PC-3 (cell line): ENCODE measurements at regions of chr14 and their contacts with region 1.

Region 1: GRCh38 chr14:93619176-93619793 is 169.0 kb downstream of the PRIMA1 start:
- DNase-seq: peak; percentile 68
- ATAC-seq: peak; percentile 65; the same call in 1 of the 2 replicates
- H3K4me3 ChIP-seq: no peak overlapping the region
- H3K27ac ChIP-seq: no peak overlapping the region
- H3K4me1 ChIP-seq: no peaks in the 10 kb centered on the region
- H3K27me3 ChIP-seq: peaks cover 57% of the 10 kb centered on the region
- CTCF ChIP-seq: peak; percentile 82

Region 2: GRCh38 chr14:93543766-93544165 is 75.5 kb before region 1 on chr14:
- CTCF ChIA-PET with region 1: no interaction called
- POLR2A ChIA-PET with region 1: no interaction called
- intact Hi-C with region 1: loop called (anchors 2 kb)
- DNase-seq: peak; percentile 53
- ATAC-seq: peak; percentile 60; the same call in 1 of the 2 replicates
- H3K4me3 ChIP-seq: no peak overlapping the region
- H3K27ac ChIP-seq: no peak overlapping the region
- H3K4me1 ChIP-seq: no peaks in the 10 kb centered on the region
- H3K27me3 ChIP-seq: peaks cover 49% of the 10 kb centered on the region
- CTCF ChIP-seq: peak; percentile 63

Region 3: GRCh38 chr14:94056579-94057308 is 437.5 kb after region 1 on chr14:
- CTCF ChIA-PET with region 1: no interaction called
- POLR2A ChIA-PET with region 1: no interaction called
- intact Hi-C with region 1: no loop called
- DNase-seq: no peak
- ATAC-seq: no peak
- H3K4me3 ChIP-seq: no peak overlapping the region
- H3K27ac ChIP-seq: no peak overlapping the region
- H3K4me1 ChIP-seq: no peaks in the 10 kb centered on the region
- H3K27me3 ChIP-seq: no peaks in the 10 kb centered on the region
- CTCF ChIP-seq: no peak